Endothelial cell of umbilical vein (primary cell): ENCODE measurements at regions of chr1 and their contacts with region 1.

Region 1: GRCh38 chr1:145978854-145979759 is 14.6 kb downstream of the POLR3GL start:
- DNase-seq: peak; percentile 98
- H3K4me3 ChIP-seq: peak overlapping the region in 1 of 3 experiments; percentile 37
- H3K27ac ChIP-seq: peak overlapping the region; percentile 89
- H3K4me1 ChIP-seq: peaks cover 40% of the 10 kb centered on the region
- H3K27me3 ChIP-seq: no peaks in the 10 kb centered on the region
- CTCF ChIP-seq: no peak
- POLR2A ChIP-seq: peak; percentile 52

Region 2: GRCh38 chr1:145963995-145964901 is 14.9 kb before region 1 on chr1 and contains the starts of genes ANKRD34A and POLR3GL:
- CTCF ChIA-PET with region 1: interaction called, 15 read pairs
- POLR2A ChIA-PET with region 1: interaction called, 7 read pairs
- dilution Hi-C with region 1: no loop called
- intact Hi-C with region 1: no loop called
- DNase-seq: peak; percentile 96
- H3K4me3 ChIP-seq: peak within 1 kb of the TSS; percentile 38 to 77 (median 60)
- H3K27ac ChIP-seq: peak within 1 kb of the TSS; percentile 43
- H3K4me1 ChIP-seq: peaks cover 34% of the 10 kb centered on the region
- H3K27me3 ChIP-seq: no peaks in the 10 kb centered on the region
- CTCF ChIP-seq: no peak
- POLR2A ChIP-seq: peak; percentile 82
- total RNA-seq, gene ANKRD34A: 0.24 and 0.60 TPM in 2 replicates
- total RNA-seq, gene POLR3GL: 15.3 and 18.8 TPM in 2 replicates

Region 3: GRCh38 chr1:145996433-145997015 is 17.4 kb after region 1 on chr1 and contains the start of gene TXNIP:
- CTCF ChIA-PET with region 1: interaction called, 496 read pairs
- POLR2A ChIA-PET with region 1: interaction called, 4 read pairs
- dilution Hi-C with region 1: no loop called
- intact Hi-C with region 1: loop called (anchors 1 kb)
- DNase-seq: peak; percentile 97
- H3K4me3 ChIP-seq: peak within 1 kb of the TSS; percentile 97 to 98 (median 98)
- H3K27ac ChIP-seq: peak within 1 kb of the TSS; percentile 4
- H3K4me1 ChIP-seq: peaks cover 19% of the 10 kb centered on the region
- H3K27me3 ChIP-seq: no peaks in the 10 kb centered on the region
- CTCF ChIP-seq: no peak
- POLR2A ChIP-seq: peak; percentile 77
- total RNA-seq, gene TXNIP: 7.6 and 9.1 TPM in 2 replicates

Region 4: DNA sequence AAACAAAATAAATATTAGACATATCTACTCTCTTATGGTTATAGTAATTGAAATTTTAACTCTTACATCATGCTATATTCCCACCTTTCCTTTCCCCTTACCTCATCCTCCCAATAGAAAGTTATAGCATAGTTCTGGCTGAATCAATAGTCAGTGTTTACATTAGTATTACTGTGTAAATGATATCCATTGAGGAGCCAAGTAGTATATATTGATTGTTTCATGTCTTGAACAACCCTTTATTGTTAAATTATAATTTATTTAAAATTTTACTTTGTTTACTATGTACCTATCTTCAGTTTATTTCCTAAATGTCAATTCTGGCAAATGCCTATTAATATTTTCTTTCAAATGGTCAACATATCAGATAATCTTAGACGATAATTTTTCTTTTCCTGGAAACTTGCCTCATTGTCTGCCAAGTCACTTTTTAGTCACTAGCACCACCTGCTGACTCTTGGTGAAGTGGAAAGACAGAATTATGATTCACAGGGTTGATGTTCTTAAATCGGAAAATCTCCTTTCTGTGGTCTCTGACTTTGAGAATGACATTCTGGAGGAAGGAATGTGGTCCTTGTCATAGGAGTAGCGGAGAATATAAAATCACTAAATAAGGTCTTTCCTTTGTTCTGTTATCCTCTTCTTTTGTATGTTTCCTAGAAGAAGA is 33.8 kb after region 1 on chr1:
- CTCF ChIA-PET with region 1: interaction called, 496 read pairs
- POLR2A ChIA-PET with region 1: interaction called, 4 read pairs
- dilution Hi-C with region 1: no loop called
- intact Hi-C with region 1: loop called (anchors 1 kb)
- DNase-seq: peak; percentile 84
- H3K4me3 ChIP-seq: no peak overlapping the region
- H3K27ac ChIP-seq: no peak overlapping the region
- H3K4me1 ChIP-seq: peaks cover 4% of the 10 kb centered on the region
- H3K27me3 ChIP-seq: peaks cover 6 to 9% of the 10 kb centered on the region in 2 experiments
- CTCF ChIP-seq: peak; percentile 52 to 60
- POLR2A ChIP-seq: no peak

Region 5: GRCh38 chr1:146019231-146020057 is 40.3 kb after region 1 on chr1:
- CTCF ChIA-PET with region 1: interaction called, 10 read pairs
- POLR2A ChIA-PET with region 1: no interaction called
- dilution Hi-C with region 1: no loop called
- intact Hi-C with region 1: no loop called
- DNase-seq: no peak
- H3K4me3 ChIP-seq: no peak overlapping the region
- H3K27ac ChIP-seq: no peak overlapping the region
- H3K4me1 ChIP-seq: no peaks in the 10 kb centered on the region
- H3K27me3 ChIP-seq: peaks cover 44 to 55% of the 10 kb centered on the region in 2 experiments
- CTCF ChIP-seq: no peak
- POLR2A ChIP-seq: no peak

Region 6: DNA sequence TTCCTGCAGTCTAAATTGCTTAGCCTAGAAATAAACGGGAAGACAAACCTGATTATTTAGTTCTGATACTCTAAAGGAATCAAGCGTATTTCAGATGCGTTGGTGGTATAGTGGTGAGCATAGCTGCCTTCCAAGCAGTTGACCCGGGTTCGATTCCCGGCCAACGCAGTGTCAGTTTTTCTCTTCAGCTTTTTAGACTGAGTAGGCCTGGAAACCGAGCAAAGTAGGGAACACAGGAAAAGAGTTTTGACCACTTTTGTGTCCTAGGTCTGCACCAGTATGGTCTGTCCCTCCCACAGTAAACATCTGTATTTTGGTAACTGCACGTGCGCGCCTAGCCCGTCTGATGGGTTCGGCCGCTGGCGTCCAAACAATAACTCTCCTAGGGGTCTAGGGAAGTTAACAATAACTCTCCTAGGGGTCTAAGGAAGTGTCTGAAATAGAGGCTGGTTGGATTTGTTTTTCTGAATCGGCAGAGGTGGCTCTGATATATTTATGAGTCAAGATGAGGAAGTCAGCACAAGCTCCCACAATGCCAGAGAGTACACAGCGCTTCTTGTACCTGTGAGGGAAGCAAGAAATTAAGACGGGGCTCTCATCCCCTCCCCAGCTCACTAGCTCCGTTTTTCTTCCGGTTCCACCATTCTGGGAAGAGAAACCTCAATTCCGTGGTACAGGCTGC is 58.0 kb after region 1 on chr1:
- CTCF ChIA-PET with region 1: interaction called, 11 read pairs
- POLR2A ChIA-PET with region 1: interaction called, 10 read pairs
- dilution Hi-C with region 1: no loop called
- intact Hi-C with region 1: no loop called
- DNase-seq: peak; percentile 94
- H3K4me3 ChIP-seq: peak overlapping the region; percentile 53 to 90 (median 64)
- H3K27ac ChIP-seq: peak overlapping the region; percentile 69
- H3K4me1 ChIP-seq: peaks cover 9% of the 10 kb centered on the region
- H3K27me3 ChIP-seq: no peaks in the 10 kb centered on the region
- CTCF ChIP-seq: no peak
- POLR2A ChIP-seq: no peak